Activated CD8-positive, alpha-beta T cell treated with anti-CD3 and anti-CD28 coated beads for 36 hours (primary cell): ENCODE measurements at regions of chr12 and their contacts with region 1.

Region 1: GRCh38 chr12:118135788-118136558 is at the start of gene PEBP1:
- DNase-seq: peak; percentile 95
- ATAC-seq: peak; percentile 99
- H3K4me3 Mint-ChIP-seq: peak within 1 kb of the TSS; percentile 93
- H3K27ac Mint-ChIP-seq: peak within 1 kb of the TSS; percentile 91
- H3K4me1 Mint-ChIP-seq: peaks cover 31% of the 10 kb centered on the region
- H3K27me3 Mint-ChIP-seq: no peaks in the 10 kb centered on the region
- CTCF ChIP-seq: no peak
- total RNA-seq, gene PEBP1: 122 to 128 TPM

Region 2: DNA sequence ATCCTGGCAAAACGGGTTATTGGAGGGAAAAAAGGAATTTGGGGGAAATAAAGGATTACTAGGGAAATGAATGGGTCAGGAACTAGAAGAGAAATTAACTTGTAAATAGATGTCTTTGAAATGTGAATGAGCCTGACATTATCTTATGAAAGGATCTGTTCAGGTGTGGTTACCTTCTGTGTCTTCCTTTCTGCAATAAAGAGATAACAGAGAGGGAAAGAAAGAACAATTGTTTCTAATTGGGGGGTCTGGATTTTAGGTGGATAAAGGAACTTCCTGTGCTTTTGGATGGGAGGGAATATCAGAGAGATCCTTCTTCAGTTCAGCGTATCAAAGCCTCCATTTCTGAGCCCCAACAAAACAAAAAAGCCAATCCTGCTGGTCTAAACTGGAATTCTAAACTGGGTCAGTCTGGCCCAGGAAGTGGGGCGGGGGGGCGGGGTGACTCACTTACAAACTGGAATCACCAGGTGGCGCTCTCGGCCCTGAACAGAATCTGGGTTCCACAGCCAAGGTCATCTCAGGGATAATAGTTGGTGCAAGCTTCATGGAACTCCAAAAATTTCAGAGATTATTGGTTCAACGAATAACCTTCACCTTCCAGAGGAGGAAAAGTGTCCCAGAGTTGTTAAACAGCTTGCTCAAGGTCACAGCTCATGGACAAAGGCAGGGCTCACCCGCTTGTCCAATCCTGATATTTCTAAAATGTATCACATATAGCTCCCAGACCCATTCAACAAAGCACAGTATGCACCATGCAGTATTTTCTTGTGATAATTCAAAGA is 15.2 kb before region 1 on chr12:
- CTCF ChIA-PET with region 1: interaction called, 13 read pairs
- POLR2A ChIA-PET with region 1: interaction called, 4 read pairs
- intact Hi-C with region 1: no loop called
- DNase-seq: peak; percentile 79
- ATAC-seq: peak; percentile 66
- H3K4me3 Mint-ChIP-seq: no peak overlapping the region
- H3K27ac Mint-ChIP-seq: peak overlapping the region; percentile 79
- H3K4me1 Mint-ChIP-seq: peaks cover 8% of the 10 kb centered on the region
- H3K27me3 Mint-ChIP-seq: no peaks in the 10 kb centered on the region
- CTCF ChIP-seq: peak; percentile 93

Region 3: GRCh38 chr12:118148287-118148686 is 12.3 kb after region 1 on chr12:
- CTCF ChIA-PET with region 1: interaction called, 3 read pairs
- POLR2A ChIA-PET with region 1: interaction called, 10 read pairs
- intact Hi-C with region 1: no loop called
- DNase-seq: no peak
- ATAC-seq: no peak
- H3K4me3 Mint-ChIP-seq: no peak overlapping the region
- H3K27ac Mint-ChIP-seq: no peak overlapping the region
- H3K4me1 Mint-ChIP-seq: peaks cover 8% of the 10 kb centered on the region
- H3K27me3 Mint-ChIP-seq: no peaks in the 10 kb centered on the region
- CTCF ChIP-seq: no peak